Activated CD8-positive, alpha-beta T cell treated with anti-CD3 and anti-CD28 coated beads, Interleukin-2, amount 10 ng/mL, durations not matched to agents 7 days and 5 days (primary cell): ENCODE measurements at regions of chr19 and their contacts with region 1.

Region 1: DNA sequence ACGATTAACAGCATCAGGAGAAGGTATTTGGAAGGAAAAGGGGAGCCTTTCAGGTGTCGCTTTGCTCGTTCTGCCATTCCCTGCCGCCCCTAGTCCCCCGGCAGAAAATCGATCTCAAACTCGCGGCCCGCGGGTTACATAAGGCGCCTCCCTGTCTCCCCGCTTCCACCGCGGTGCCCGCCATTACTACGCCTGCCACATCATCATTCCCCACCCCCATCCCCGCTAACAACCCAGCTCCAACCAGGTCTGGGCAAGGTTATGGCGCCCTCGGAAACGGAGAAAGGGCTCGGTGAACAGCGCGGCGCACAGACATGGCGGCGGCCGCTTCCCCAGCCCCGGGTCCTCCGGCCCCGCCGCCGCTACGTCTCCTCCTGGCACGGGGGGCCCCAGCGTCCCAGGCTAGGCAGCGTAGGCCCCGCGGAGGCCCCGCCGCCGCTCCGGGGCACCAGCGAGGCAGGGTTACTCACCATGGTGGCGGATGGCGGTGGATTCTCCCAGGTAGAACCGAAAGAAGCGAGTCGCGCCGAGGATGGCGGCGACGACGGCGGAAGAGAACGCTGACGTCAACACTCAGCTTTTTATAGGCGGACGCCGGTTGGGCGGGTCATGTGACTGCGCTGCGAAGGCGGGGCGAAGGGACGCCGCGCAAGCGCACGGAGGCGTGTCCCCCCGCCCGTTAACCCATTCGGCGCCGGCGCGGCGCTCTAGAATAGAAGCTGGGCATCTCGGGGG is at the start of gene EEF2:
- DNase-seq: peak; percentile 92
- ATAC-seq: peak; percentile 53
- H3K4me3 Mint-ChIP-seq: peak within 1 kb of the TSS; percentile 95
- H3K27ac Mint-ChIP-seq: peak within 1 kb of the TSS; percentile 92
- H3K4me1 Mint-ChIP-seq: peaks cover 53% of the 10 kb centered on the region
- H3K27me3 Mint-ChIP-seq: no peaks in the 10 kb centered on the region
- total RNA-seq, gene EEF2: 1,524 to 1,558 TPM

Region 2: DNA sequence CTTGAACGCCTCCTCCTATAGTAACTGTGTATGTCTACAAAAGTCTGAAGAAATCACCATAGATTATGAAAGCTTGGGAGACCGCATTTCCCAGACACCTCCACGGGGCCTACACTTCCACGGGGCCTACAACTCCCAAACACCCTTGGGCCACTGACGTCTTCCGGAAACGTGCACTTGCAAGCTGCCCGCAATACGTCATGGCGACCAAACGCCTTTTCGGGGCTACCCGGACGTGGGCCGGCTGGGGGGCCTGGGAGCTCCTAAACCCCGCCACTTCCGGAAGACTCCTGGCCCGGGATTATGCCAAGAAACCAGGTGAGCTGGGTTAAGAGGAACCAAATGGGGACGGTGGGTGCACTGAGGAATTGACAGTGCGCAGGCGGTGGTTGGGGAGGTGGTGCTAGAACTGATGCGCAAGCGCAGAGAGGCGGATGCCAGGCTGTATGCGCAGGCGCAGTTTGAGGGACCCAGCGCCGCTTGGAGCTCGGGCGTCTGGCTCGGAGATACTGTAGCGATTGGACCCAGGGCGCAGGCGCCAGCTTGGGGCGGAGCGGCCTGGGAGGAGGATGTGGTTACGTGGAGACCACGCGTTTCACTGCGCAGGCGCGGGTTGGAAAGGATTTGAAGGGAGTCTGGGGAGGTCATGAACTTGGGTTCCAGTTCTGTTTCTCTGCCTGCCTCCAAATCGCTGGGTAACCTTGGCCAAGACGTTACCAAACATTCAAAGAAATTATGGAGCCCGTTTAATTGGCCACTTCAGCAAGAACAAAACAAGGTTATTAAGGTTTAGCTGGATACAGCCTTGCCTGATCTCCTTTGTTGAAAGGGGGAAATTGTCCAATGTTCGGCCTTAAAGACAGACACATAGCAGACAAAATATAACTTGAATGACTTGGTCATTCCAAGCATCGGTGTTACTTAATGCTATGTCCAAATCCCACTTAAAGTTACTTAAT is 222.3 kb before region 1 on chr19 and contains the start of gene MRPL54:
- CTCF ChIA-PET with region 1: interaction called, 11 read pairs
- POLR2A ChIA-PET with region 1: interaction called, 5 read pairs
- DNase-seq: peak; percentile 100
- ATAC-seq: peak; percentile 86
- H3K4me3 Mint-ChIP-seq: peak within 1 kb of the TSS; percentile 96
- H3K27ac Mint-ChIP-seq: peak within 1 kb of the TSS; percentile 100
- H3K4me1 Mint-ChIP-seq: peaks cover 47% of the 10 kb centered on the region
- H3K27me3 Mint-ChIP-seq: no peaks in the 10 kb centered on the region
- total RNA-seq, gene MRPL54: 66.9 to 71.4 TPM

Region 3: GRCh38 chr19:3970808-3971598 is 14.1 kb before region 1 on chr19 and contains the start of gene DAPK3:
- CTCF ChIA-PET with region 1: interaction called, 23 read pairs
- POLR2A ChIA-PET with region 1: interaction called, 32 read pairs
- DNase-seq: peak; percentile 94
- ATAC-seq: peak; percentile 91
- H3K4me3 Mint-ChIP-seq: peak within 1 kb of the TSS; percentile 87
- H3K27ac Mint-ChIP-seq: peak within 1 kb of the TSS; percentile 86
- H3K4me1 Mint-ChIP-seq: peaks cover 37% of the 10 kb centered on the region
- H3K27me3 Mint-ChIP-seq: no peaks in the 10 kb centered on the region
- total RNA-seq, gene DAPK3: 43.0 to 44.9 TPM

Region 4: GRCh38 chr19:4007021-4007835 is 22.2 kb after region 1 on chr19 and contains the start of gene PIAS4:
- CTCF ChIA-PET with region 1: interaction called, 29 read pairs
- POLR2A ChIA-PET with region 1: interaction called, 17 read pairs
- DNase-seq: peak; percentile 96
- ATAC-seq: peak; percentile 93
- H3K4me3 Mint-ChIP-seq: peak within 1 kb of the TSS; percentile 83
- H3K27ac Mint-ChIP-seq: peak within 1 kb of the TSS; percentile 82
- H3K4me1 Mint-ChIP-seq: peaks cover 18% of the 10 kb centered on the region
- H3K27me3 Mint-ChIP-seq: no peaks in the 10 kb centered on the region
- total RNA-seq, gene PIAS4: 34.2 to 35.6 TPM

Region 5: DNA sequence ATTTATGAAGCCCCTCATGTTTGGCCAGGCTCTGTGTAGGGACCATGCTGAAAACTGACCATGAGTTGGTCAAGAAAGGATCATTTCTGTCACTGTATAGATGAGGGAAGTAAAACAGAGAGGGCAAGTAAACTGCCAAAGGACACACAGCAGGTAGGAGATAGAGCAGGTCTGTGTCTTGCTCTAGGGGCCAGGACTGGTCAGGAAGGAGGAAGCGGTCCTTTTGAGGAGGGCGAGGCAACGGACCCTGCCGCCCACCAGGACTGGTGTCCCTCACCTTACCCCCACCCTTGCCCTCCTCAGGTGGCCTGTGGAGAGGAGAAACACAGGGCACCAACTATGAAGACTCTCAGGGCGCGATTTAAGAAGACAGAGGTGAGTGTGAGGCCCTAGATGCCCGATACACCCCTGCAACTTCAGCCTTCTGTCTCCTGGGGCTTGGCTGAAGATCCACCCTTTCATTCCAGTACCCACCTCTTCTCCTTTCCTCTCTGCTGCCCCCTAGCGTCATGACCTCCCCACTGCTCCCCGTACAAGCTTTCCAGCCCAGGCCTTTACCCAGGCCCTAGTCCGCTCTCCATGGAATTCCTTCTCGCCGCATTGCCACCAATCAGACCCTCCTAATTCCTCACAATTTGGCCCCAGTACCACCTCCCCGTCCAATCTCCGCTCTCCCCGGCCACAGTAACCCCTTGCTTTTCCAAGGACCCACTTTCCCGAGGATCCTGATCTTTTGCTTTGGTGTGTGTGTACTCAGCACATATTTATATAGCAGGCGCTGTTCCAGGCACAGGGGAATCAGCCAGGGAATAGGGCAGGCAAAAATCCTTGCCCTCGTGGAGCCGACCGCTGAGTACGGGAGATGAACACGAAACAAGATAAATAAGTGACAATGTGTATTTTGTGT is 201.3 kb after region 1 on chr19:
- CTCF ChIA-PET with region 1: interaction called, 10 read pairs
- POLR2A ChIA-PET with region 1: interaction called, 3 read pairs
- DNase-seq: peak; percentile 90
- ATAC-seq: peak; percentile 62
- H3K4me3 Mint-ChIP-seq: no peak overlapping the region
- H3K27ac Mint-ChIP-seq: no peak overlapping the region
- H3K4me1 Mint-ChIP-seq: peaks cover 20% of the 10 kb centered on the region
- H3K27me3 Mint-ChIP-seq: no peaks in the 10 kb centered on the region

Region 6: DNA sequence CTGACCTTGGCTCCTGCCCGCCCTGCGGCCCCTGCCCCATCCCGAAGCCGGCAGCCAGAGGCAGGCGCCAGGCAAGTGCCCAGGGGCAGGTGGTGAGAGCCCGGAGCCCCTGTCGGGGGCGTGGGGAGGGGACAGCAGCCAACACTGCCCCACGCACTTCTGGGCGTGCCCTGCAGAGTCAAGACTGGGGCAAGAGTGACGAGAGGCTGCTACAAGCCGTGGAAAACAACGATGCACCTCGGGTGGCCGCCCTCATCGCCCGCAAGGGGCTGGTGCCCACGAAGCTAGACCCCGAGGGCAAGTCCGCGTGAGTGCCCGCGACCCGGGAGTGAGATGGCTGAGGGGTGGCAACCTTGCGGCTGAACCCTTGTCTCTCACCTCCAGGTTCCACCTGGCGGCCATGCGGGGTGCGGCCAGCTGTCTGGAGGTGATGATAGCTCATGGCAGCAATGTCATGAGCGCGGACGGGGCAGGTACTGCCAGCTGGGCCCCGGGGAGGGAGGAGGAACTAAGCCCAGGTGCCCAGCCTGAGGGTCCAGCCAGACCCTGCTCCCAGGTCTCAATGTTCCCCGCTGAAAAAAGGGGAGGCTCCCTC is 214.7 kb after region 1 on chr19:
- CTCF ChIA-PET with region 1: interaction called, 17 read pairs
- POLR2A ChIA-PET with region 1: interaction called, 9 read pairs
- DNase-seq: no peak
- ATAC-seq: no peak
- H3K4me3 Mint-ChIP-seq: no peak overlapping the region
- H3K27ac Mint-ChIP-seq: no peak overlapping the region
- H3K4me1 Mint-ChIP-seq: peaks cover 9% of the 10 kb centered on the region
- H3K27me3 Mint-ChIP-seq: peaks cover 24% of the 10 kb centered on the region

Region 7: DNA sequence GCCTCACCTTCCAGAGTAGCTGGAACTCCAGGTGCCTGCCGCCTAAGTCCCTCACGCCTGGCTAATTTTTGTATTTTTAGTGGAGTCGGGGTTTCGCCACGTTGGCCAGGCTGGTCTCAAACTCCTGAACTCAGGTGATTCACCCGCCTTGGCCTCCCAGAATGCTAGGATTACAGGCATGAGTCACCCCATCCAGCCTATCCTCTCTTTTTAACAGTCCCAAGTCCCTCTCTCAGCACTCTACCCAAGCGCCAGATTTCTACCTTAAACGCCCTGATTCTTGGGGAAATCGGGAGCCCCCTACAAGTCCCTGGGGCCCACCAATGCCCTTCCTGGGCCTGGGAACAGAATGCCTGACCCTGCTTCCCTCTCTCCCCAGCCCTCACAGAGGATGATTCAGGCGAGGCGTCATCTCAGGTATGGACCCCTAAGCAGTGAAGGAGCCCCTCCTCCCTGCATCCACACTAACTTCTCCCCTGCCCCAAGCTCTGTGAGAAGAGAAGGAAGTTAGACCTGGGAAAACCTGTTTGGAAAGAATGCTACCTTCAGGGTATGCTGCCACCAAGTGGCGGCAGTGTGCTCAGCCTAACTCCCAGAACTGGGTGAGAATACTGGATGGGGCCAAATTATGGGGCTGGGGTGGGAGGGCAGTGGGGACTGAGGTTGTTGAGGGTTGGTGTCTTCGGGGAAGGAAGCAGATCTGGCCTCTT is 223.5 kb after region 1 on chr19:
- CTCF ChIA-PET with region 1: interaction called, 14 read pairs
- POLR2A ChIA-PET with region 1: interaction called, 3 read pairs
- DNase-seq: no peak
- ATAC-seq: no peak
- H3K4me3 Mint-ChIP-seq: no peak overlapping the region
- H3K27ac Mint-ChIP-seq: no peak overlapping the region
- H3K4me1 Mint-ChIP-seq: no peaks in the 10 kb centered on the region
- H3K27me3 Mint-ChIP-seq: peaks cover 2% of the 10 kb centered on the region